K562 (cell line): ENCODE measurements at regions of chrX and their contacts with region 1.

Region 1: GRCh38 chrX:19739683-19740082 is 147.7 kb downstream of the SH3KBP1 start:
- DNase-seq: peak; percentile 58 to 65 (median 60)
- ATAC-seq: peak; percentile 93
- H3K4me3 ChIP-seq: no peak overlapping the region
- H3K27ac ChIP-seq: no peak overlapping the region
- H3K4me1 ChIP-seq: no peaks in the 10 kb centered on the region
- H3K27me3 ChIP-seq: peaks cover 0 to 5% of the 10 kb centered on the region in 2 experiments; a peak in 2 of 5 replicates
- CTCF ChIP-seq: peak; percentile 68 to 86 (median 72)
- EP300 ChIP-seq: no peak
- POLR2A ChIP-seq: no peak
- RAD21 ChIP-seq: peak; percentile 64 to 75

Region 2: GRCh38 chrX:19593690-19594089 is 146.0 kb before region 1 on chrX:
- CTCF ChIA-PET with region 1: no interaction called
- POLR2A ChIA-PET with region 1: no interaction called
- in situ Hi-C with region 1: no loop called
- intact Hi-C with region 1: loop called (anchors 10 kb)
- DNase-seq: peak in 3 of 4 experiments; percentile 7 to 20 (median 13)
- ATAC-seq: no peak
- H3K4me3 ChIP-seq: no peak overlapping the region
- H3K27ac ChIP-seq: no peak overlapping the region
- H3K4me1 ChIP-seq: no peaks in the 10 kb centered on the region; a peak in 1 of 5 replicates
- H3K27me3 ChIP-seq: peaks cover 0 to 5% of the 10 kb centered on the region in 2 experiments; a peak in 2 of 5 replicates
- CTCF ChIP-seq: peak; percentile 17 to 59 (median 35); a peak in 4 of 6 replicates
- EP300 ChIP-seq: no peak
- POLR2A ChIP-seq: no peak
- RAD21 ChIP-seq: peak; percentile 55 to 75